ENCODE measurements at regions of chr5 and their contacts with region 1.

Region 1: DNA sequence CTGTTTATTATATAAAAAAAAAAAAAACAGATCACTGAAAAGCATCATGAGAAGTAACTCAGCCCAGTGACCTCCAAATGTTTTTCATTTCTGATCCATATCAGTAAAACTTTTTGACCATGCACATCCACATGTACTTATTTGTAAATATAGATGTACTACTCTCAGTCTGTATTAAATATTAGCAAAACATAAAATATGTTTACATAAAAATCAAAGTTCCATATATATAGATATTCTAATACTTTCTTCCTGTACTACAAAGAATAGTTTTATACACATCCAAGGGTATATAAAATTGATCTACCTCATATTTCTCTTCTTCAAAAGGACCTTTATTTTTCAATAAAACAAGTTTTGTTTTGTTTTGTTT is 309.1 kb downstream of the RAB3C start:
- DNase-seq: no peak
- H3K4me3 ChIP-seq: no peak overlapping the region
- H3K27ac ChIP-seq: no peak overlapping the region
- H3K4me1 ChIP-seq: peaks cover 0 to 3% (median 2%) of the 10 kb centered on the region in 4 experiments
- H3K27me3 ChIP-seq: no peaks in the 10 kb centered on the region

Region 2: GRCh38 chr5:58773744-58774441 is 118.1 kb before region 1 on chr5:
- CTCF ChIA-PET with region 1: no interaction called
- POLR2A ChIA-PET with region 1: no interaction called
- DNase-seq: no peak
- H3K4me3 ChIP-seq: no peak overlapping the region
- H3K27ac ChIP-seq: no peak overlapping the region
- H3K4me1 ChIP-seq: no peaks in the 10 kb centered on the region
- H3K27me3 ChIP-seq: no peaks in the 10 kb centered on the region

Region 3: DNA sequence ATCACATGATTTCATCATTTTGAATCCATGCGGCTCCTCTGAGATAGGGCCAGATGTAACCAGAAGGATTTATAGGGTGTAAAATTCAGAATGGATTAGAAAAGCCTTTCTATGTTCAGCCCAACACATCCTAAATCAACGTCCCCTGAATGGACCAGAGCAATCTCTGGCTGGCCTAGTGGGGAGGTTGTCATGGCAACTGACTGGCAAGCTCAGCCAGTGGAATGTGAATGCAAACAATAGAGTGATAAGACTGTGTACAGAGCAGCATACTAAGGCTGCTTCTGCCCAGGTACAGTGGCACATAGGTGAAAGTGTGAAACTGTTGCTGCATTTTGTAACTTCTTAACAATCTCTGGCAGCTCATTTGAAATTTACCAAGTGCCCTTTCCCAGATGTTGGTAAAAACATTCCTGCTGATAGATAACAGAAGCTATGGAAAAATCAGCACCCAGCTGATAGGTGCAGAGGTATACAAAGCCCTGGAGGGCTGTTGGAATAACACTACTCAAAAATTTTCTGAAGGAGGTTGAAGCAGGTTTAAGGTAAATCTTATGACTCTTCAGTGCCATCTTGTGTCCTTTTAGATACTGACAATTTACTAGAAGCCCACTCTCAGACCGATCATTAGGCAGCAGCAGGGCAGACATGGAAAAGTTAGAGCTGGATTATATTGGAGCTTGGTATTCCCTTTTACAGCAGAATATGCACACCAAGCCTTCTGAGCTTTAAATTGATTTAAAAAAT is 41.9 kb before region 1 on chr5:
- CTCF ChIA-PET with region 1: no interaction called
- POLR2A ChIA-PET with region 1: no interaction called
- DNase-seq: peak; percentile 39 to 67 (median 66)
- H3K4me3 ChIP-seq: no peak overlapping the region
- H3K27ac ChIP-seq: no peak overlapping the region
- H3K4me1 ChIP-seq: peaks cover 0 to 3% (median 0%) of the 10 kb centered on the region in 4 experiments
- H3K27me3 ChIP-seq: no peaks in the 10 kb centered on the region

Region 4: GRCh38 chr5:58983526-58984452 is 91.8 kb after region 1 on chr5:
- CTCF ChIA-PET with region 1: interaction called, 15 read pairs
- POLR2A ChIA-PET with region 1: no interaction called
- DNase-seq: peak in 2 of 3 donors; percentile 75 to 84
- H3K4me3 ChIP-seq: peak overlapping the region in 1 of 7 experiments; percentile 9
- H3K27ac ChIP-seq: peak overlapping the region in 1 of 2 experiments; percentile 60
- H3K4me1 ChIP-seq: peaks cover 3 to 22% (median 7%) of the 10 kb centered on the region in 4 experiments
- H3K27me3 ChIP-seq: no peaks in the 10 kb centered on the region

Region 5: GRCh38 chr5:58999804-59000595 is 108.0 kb after region 1 on chr5:
- CTCF ChIA-PET with region 1: interaction called, 11 read pairs
- POLR2A ChIA-PET with region 1: no interaction called
- DNase-seq: no peak
- H3K4me3 ChIP-seq: no peak overlapping the region
- H3K27ac ChIP-seq: no peak overlapping the region
- H3K4me1 ChIP-seq: no peaks in the 10 kb centered on the region
- H3K27me3 ChIP-seq: no peaks in the 10 kb centered on the region